ENCODE measurements at regions of chr11 and their contacts with region 1.

Region 1: DNA sequence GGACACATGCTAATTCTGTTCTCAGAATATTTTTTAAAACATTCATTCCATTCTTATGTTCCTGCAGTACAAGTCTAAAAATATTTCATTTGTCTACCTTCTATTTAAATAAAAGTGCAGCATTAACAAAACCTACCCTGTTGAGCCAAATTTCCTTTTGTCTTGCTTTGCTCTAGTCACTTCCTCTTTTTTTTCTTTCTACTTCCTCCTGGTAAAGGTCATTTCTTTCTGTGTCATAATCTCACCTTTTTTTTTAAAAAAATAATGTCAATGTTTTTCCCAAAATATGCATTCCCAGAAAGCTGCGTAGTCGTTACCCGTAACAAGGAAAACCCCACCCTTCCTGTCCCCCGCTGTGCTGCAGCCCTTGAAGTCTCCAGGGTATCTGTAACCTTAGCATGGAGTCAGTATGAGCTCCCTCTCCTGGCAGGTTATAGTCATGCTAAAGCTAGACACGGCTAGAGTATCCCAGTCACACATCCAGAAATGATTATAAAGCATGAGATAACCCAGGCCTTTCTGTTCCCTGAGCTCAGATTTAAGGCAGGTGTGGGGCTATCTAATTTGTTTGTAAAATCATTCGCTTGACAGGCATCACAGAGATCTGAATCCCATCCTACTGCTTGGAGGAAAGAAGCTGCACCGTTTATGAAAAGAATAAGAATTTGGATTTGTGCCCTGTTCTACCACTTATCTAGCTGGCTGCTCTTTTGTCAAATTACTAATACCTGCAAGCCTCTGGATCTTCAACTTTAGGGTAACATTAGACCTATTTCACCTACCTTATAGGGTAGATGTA is 51.1 kb upstream of the EED start:
- DNase-seq: peak; percentile 50 to 57
- ATAC-seq: peak; percentile 99 to 100
- H3K4me3 ChIP-seq: peak overlapping the region; percentile 22 to 33 (median 33)
- H3K27ac ChIP-seq: peak overlapping the region; percentile 43 to 56 (median 52)
- H3K4me1 ChIP-seq: peaks cover 8 to 12% of the 10 kb centered on the region in 2 donors
- H3K27me3 ChIP-seq: no peaks in the 10 kb centered on the region
- CTCF ChIP-seq: peak; percentile 69 to 82 (median 79)
- POLR2A ChIP-seq: no peak

Region 2: DNA sequence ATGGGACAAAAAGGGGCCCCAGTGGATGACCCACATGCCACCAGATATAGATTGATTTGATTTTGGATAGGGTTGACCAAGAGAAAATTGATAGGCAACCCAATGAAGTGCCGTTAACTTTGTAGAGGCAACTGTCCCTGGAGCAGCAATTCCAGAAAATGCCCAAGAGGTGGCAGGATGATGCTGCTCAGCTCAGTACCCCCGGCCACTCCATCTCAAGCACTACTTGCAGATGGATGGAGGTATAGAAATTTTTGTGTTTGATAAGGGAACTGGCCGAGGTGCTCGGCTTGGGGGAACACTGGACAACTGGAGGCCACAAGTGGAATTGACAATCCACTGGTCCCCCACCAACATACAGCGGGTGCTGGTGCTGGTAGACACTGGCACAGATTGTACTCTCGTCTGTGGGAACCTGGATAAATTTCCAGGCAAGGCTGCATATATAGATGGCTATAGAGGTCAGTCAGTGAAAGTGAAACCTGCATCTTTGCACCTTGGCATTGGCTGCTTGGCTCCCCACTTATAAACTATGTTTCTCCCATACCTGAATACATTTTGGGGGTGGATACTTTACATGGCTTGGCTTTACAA is 252.0 kb before region 1 on chr11:
- in situ Hi-C with region 1: no loop called
- intact Hi-C with region 1: loop called (anchors 1 kb)
- DNase-seq: peak; percentile 32 to 45
- ATAC-seq: peak; percentile 70 to 81
- H3K4me3 ChIP-seq: no peak overlapping the region
- H3K27ac ChIP-seq: no peak overlapping the region
- H3K4me1 ChIP-seq: peaks cover 0 to 9% of the 10 kb centered on the region in 2 donors
- H3K27me3 ChIP-seq: no peaks in the 10 kb centered on the region
- CTCF ChIP-seq: peak; percentile 63 to 79 (median 73)
- POLR2A ChIP-seq: no peak

Region 3: GRCh38 chr11:86035164-86035563 is 158.3 kb before region 1 on chr11:
- in situ Hi-C with region 1: loop called in 3 of 4 experiments (anchors 5 to 10 kb)
- intact Hi-C with region 1: no loop called
- DNase-seq: peak; percentile 40 to 61
- ATAC-seq: peak; percentile 82 to 84
- H3K4me3 ChIP-seq: no peak overlapping the region
- H3K27ac ChIP-seq: peak overlapping the region; percentile 57 to 83 (median 74)
- H3K4me1 ChIP-seq: peaks cover 79 to 81% of the 10 kb centered on the region in 2 donors
- H3K27me3 ChIP-seq: no peaks in the 10 kb centered on the region
- CTCF ChIP-seq: no peak
- POLR2A ChIP-seq: no peak

Region 4: GRCh38 chr11:86174101-86175046 is 19.1 kb before region 1 on chr11:
- in situ Hi-C with region 1: no loop called
- intact Hi-C with region 1: loop called (anchors 2 kb)
- DNase-seq: peak; percentile 91 to 95
- ATAC-seq: peak; percentile 98 to 99
- H3K4me3 ChIP-seq: no peak overlapping the region
- H3K27ac ChIP-seq: peak overlapping the region; percentile 83 to 88 (median 85)
- H3K4me1 ChIP-seq: peaks cover 40 to 51% of the 10 kb centered on the region in 2 donors
- H3K27me3 ChIP-seq: no peaks in the 10 kb centered on the region
- CTCF ChIP-seq: peak in 1 of 5 experiments; percentile 14
- POLR2A ChIP-seq: peak in 1 of 2 donors; percentile 12